ENCODE measurements at regions of chr11 and their contacts with region 1.

Region 1: GRCh38 chr11:134050541-134051383 is 18.1 kb upstream of the JAM3 start:
- DNase-seq: peak; percentile 78
- ATAC-seq: peak; percentile 96
- H3K4me3 Mint-ChIP-seq: no peak overlapping the region
- H3K27ac Mint-ChIP-seq: peak overlapping the region; percentile 56
- H3K4me1 Mint-ChIP-seq: peaks cover 6% of the 10 kb centered on the region
- H3K27me3 Mint-ChIP-seq: peaks cover 18% of the 10 kb centered on the region

Region 2: GRCh38 chr11:133927690-133928627 is 122.8 kb before region 1 on chr11:
- CTCF ChIA-PET with region 1: interaction called, 44 read pairs
- DNase-seq: peak; percentile 80
- ATAC-seq: peak; percentile 70
- H3K4me3 Mint-ChIP-seq: peak overlapping the region; percentile 53
- H3K27ac Mint-ChIP-seq: peak overlapping the region; percentile 78
- H3K4me1 Mint-ChIP-seq: peaks cover 32% of the 10 kb centered on the region
- H3K27me3 Mint-ChIP-seq: no peaks in the 10 kb centered on the region

Region 3: GRCh38 chr11:134062265-134063123 is 11.7 kb after region 1 on chr11:
- CTCF ChIA-PET with region 1: interaction called, 26 read pairs
- DNase-seq: peak; percentile 27
- ATAC-seq: no peak
- H3K4me3 Mint-ChIP-seq: no peak overlapping the region
- H3K27ac Mint-ChIP-seq: no peak overlapping the region
- H3K4me1 Mint-ChIP-seq: peaks cover 27% of the 10 kb centered on the region
- H3K27me3 Mint-ChIP-seq: peaks cover 72% of the 10 kb centered on the region

Region 4: GRCh38 chr11:134098566-134099184 is 47.9 kb after region 1 on chr11:
- CTCF ChIA-PET with region 1: interaction called, 62 read pairs
- DNase-seq: no peak
- ATAC-seq: peak; percentile 64
- H3K4me3 Mint-ChIP-seq: no peak overlapping the region
- H3K27ac Mint-ChIP-seq: no peak overlapping the region
- H3K4me1 Mint-ChIP-seq: no peaks in the 10 kb centered on the region
- H3K27me3 Mint-ChIP-seq: peaks cover 2% of the 10 kb centered on the region

Region 5: DNA sequence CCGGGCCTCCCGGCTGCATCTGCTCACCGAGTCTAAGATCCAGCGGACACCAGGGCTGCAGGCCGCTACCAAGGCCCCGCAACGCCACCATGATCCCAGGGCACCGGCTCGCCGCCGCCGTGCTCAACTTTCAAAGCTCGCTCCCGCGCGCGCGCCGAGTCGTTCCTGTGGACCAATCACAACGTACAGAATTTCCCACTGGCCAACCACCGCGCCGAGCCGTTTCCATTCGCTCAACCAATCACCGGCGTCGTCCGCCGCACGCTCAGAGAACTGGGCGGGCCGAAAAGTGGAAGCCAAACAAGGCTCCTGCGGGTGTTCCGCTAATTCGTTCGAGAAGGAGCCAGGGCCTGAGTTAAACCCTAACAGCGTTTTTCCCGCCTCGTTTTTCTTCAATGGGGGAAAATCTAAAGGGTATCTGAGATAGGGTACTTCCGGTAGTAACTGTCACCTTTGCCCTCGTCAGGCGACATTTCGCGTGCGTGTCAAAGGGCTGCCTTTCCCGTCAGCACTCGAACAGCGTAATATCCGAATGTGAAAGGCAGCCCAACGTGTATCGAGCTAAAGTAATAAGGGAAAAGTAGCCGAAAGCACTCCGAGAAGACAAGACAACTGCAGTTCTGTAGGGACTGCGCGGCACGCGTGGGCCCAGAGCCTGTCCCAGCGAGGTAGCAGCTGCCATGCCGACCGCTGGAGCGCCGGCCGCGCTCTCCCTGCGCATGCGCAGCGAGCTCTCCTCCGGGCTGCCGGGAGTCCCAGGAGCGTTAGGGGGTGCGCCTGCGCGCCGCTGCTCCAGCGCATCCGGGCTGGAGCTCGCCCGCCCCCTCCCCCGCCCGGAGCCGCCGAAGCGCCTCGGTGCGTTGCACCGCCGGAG is 173.3 kb after region 1 on chr11 and contains the starts of genes NCAPD3 and VPS26B:
- CTCF ChIA-PET with region 1: interaction called, 12 read pairs
- DNase-seq: peak; percentile 98
- ATAC-seq: peak; percentile 84
- H3K4me3 Mint-ChIP-seq: peak within 1 kb of the TSS; percentile 96
- H3K27ac Mint-ChIP-seq: peak within 1 kb of the TSS; percentile 96
- H3K4me1 Mint-ChIP-seq: peaks cover 65% of the 10 kb centered on the region
- H3K27me3 Mint-ChIP-seq: no peaks in the 10 kb centered on the region
- total RNA-seq, gene NCAPD3: 123 to 143 TPM
- total RNA-seq, gene VPS26B: 52.6 to 69.8 TPM